ENCODE measurements at regions of chr7 and their contacts with region 1.

Region 1: GRCh38 chr7:108146070-108146837 is 16.1 kb upstream of the LAMB4 start:
- DNase-seq: peak; percentile 41
- H3K4me3 Mint-ChIP-seq: no peak overlapping the region
- H3K27ac Mint-ChIP-seq: no peak overlapping the region
- H3K4me1 Mint-ChIP-seq: no peaks in the 10 kb centered on the region
- H3K27me3 Mint-ChIP-seq: peaks cover 32% of the 10 kb centered on the region

Region 2: GRCh38 chr7:108114117-108114841 is 32.0 kb before region 1 on chr7:
- CTCF ChIA-PET with region 1: interaction called, 14 read pairs
- POLR2A ChIA-PET with region 1: no interaction called
- DNase-seq: no peak
- H3K4me3 Mint-ChIP-seq: no peak overlapping the region
- H3K27ac Mint-ChIP-seq: no peak overlapping the region
- H3K4me1 Mint-ChIP-seq: no peaks in the 10 kb centered on the region
- H3K27me3 Mint-ChIP-seq: peaks cover 11% of the 10 kb centered on the region

Region 3: GRCh38 chr7:108135446-108136190 is 10.6 kb before region 1 on chr7:
- CTCF ChIA-PET with region 1: interaction called, 10 read pairs
- POLR2A ChIA-PET with region 1: no interaction called
- DNase-seq: peak; percentile 34
- H3K4me3 Mint-ChIP-seq: no peak overlapping the region
- H3K27ac Mint-ChIP-seq: peak overlapping the region; percentile 17
- H3K4me1 Mint-ChIP-seq: peaks cover 14% of the 10 kb centered on the region
- H3K27me3 Mint-ChIP-seq: peaks cover 54% of the 10 kb centered on the region

Measured in activated CD4-positive, alpha-beta memory T cell treated with anti-CD3 and anti-CD28 coated beads, Interleukin-2, amount 10 ng/mL, durations not matched to agents 7 days and 5 days (primary cell).